Mammary epithelial cell (primary cell): ENCODE measurements at regions of chr6 and their contacts with region 1.

Region 1: GRCh38 chr6:120614723-120615122 is 719.6 kb downstream of the TBC1D32 start:
- DNase-seq: no peak
- H3K4me3 ChIP-seq: no peak overlapping the region
- H3K27ac ChIP-seq: no peak overlapping the region
- H3K4me1 ChIP-seq: no peaks in the 10 kb centered on the region
- H3K27me3 ChIP-seq: no peaks in the 10 kb centered on the region
- CTCF ChIP-seq: no peak

Region 2: DNA sequence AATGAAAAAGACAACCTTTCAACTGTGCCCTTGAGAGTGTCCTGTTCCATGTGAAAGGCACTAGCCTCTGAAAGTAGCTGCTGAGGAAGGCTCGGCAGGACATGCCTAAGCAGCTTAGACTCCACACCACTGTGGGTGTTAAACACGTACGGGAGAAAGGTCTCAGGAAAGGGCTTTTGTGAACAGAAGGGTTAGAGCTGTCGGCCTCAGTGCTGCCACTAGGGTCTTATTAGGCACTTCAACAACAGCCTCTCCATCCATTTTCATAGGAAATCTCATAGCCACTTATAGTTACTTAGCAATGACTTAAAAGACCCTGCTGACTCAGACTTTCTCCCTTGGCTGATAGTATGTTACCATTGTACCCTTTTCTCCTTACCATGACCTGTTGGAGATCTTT is 56.8 kb after region 1 on chr6:
- CTCF ChIA-PET with region 1: no interaction called
- dilution Hi-C with region 1: loop called (anchors 10 kb)
- in situ Hi-C with region 1: no loop called
- intact Hi-C with region 1: no loop called
- DNase-seq: no peak
- H3K4me3 ChIP-seq: no peak overlapping the region
- H3K27ac ChIP-seq: no peak overlapping the region
- H3K4me1 ChIP-seq: no peaks in the 10 kb centered on the region
- H3K27me3 ChIP-seq: no peaks in the 10 kb centered on the region
- CTCF ChIP-seq: no peak

Region 3: DNA sequence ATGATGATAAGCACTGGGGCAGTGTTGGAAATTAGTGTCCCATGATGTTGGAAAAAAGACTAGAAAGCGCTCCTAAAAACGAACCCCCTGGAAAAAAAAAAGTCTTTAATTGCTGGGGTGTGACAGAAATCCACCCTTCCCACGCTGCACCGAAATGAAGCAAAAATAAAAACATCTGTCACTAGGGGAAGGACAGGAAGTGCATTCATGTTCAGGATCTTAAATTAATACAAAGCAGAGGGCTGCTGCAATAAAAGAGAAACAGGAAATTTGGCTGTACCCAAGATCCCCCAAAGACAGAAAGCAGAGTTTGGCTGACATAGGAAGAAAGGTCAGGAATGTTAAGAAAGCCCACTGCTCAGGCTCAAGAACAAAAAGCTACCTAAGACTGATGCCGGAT is 385.7 kb after region 1 on chr6:
- CTCF ChIA-PET with region 1: no interaction called
- dilution Hi-C with region 1: no loop called
- in situ Hi-C with region 1: no loop called
- intact Hi-C with region 1: no loop called
- DNase-seq: no peak
- H3K4me3 ChIP-seq: no peak overlapping the region
- H3K27ac ChIP-seq: no peak overlapping the region
- H3K4me1 ChIP-seq: no peaks in the 10 kb centered on the region
- H3K27me3 ChIP-seq: no peaks in the 10 kb centered on the region
- CTCF ChIP-seq: no peak